ENCODE measurements at regions of chr17 and their contacts with region 1.

Region 1: DNA sequence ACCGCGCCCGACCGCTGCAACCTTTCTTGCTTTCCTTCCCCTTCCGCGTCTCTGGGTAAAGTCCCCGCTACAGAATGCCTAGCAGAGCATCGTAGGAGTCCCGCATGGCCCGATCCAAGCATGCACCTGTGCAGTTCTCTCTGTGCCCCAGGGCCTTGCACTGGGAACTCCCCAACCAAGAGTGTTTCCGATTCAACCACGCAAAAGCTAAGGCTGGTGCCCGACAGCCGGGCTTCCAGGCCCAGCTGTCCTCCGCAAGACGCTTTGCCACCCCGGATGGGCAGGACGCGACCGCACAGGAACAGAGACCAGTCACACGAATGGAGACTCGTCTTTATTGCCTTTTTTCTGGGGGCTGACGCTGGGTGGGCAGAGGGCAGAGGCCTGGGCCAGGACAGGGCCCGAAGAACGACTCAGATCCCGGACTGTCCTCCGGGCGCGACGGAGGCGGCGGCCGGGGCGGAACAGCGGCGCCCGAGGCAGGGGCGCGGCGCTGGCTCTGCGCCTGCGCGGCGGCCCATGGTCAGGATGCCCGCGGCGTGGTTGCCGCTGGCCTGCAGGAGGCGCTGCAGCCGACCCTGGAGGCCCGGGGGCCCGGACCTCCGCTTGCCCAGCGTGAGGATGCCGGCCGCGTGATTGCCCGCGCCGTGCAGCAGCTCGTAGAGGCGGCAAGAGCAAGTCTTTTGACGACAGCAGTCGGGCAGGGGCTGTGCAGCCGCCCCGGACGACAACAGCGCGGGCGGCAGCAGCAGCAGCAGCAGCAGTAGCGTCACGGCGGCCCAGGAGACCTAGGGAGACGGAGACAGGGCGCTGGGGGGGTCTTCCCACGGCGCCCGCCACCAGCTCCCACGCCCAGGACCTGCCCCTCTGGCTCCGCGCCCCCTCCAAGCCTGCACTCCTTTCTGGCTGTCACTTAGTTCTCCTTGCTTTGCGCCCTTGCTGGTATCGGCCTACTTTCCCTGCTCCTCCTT is 1.2 kb downstream of the HCRT start:
- DNase-seq: peak; percentile 88
- ATAC-seq: peak; percentile 92

Region 2: GRCh38 chr17:41959336-41960095 is 224.5 kb before region 1 on chr17:
- intact Hi-C with region 1: no loop called
- DNase-seq: no peak
- ATAC-seq: peak; percentile 69

Region 3: DNA sequence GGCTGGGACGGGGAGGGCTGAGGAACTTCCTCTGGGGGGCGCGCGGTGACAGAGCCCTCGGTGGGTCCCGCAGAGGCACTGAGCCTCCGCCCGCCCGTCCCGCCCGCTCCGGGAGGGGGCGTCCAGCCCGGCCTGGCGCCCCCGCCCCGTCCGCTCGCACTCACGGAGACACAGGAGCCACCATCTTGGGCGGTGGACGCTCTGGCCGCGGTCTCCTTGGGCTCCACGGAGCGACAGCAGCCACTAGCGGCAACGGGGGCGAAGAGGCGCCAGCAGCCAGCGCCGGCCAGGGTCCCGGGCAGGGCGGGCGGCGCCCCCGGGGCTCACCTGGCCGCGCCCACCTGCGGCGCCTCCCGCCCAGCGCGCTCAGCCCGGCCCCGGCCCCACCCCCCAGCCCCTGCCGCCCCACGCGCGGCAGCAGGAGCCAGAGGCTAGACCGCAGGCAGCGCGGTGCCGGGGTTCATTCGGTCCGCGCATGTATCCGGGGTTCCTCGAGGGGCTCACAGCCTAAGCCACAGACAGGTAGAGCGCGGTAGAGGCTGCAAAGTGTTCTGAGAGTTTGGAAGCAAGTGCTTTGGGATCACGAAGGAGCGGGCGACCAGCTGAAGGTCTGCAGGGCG is 133.5 kb before region 1 on chr17 and contains the start of gene C17orf113:
- intact Hi-C with region 1: no loop called
- DNase-seq: peak; percentile 73
- ATAC-seq: peak; percentile 91
- total RNA-seq, gene C17orf113: 0.59 TPM

Region 4: GRCh38 chr17:42132941-42133340 is 51.1 kb before region 1 on chr17:
- intact Hi-C with region 1: no loop called
- DNase-seq: peak; percentile 67
- ATAC-seq: peak; percentile 54

Region 5: GRCh38 chr17:42527273-42527703 is 343.3 kb after region 1 on chr17:
- intact Hi-C with region 1: loop called (anchors 10 kb)
- DNase-seq: peak; percentile 66
- ATAC-seq: peak; percentile 79

Measured in Right ventricle myocardium superior (tissue), 1 donor.